WTC11 (cell line): ENCODE measurements at regions of chr6 and their contacts with region 1.

Region 1: DNA sequence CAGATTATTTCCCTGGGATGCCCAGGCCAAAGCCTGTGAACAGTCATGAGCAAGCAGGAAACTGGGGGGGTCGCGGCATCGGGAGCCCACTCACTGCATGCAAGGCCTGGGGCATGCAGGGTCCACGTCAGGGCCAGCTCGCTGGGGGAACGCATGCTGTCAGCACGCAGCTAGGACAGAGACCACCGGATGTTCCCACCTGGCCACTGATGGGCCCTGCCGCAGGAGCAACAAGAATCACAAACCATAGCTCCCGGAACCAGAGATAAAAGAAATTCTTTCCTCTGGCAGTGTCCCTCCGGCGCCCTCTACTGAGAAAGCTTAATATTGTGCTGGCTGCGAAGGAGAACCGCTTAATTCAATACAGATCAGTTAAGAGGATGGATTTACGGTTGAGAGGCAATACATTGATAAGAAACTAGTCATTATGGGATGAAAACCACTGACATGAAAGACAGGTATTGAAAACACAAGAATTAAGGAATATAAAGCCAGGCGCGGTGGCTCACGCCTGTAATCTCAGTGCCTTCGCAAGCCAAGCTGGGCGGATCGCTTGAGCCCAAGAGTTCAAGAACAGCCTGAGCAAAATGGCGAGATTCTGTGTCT is 32.6 kb downstream of the C6orf15 start:
- DNase-seq: peak; percentile 80
- ATAC-seq: peak; percentile 82
- H3K4me3 Mint-ChIP-seq: no peak overlapping the region
- H3K27ac Mint-ChIP-seq: no peak overlapping the region
- H3K4me1 Mint-ChIP-seq: peaks cover 11% of the 10 kb centered on the region
- H3K27me3 Mint-ChIP-seq: no peaks in the 10 kb centered on the region
- CTCF ChIP-seq: peak; percentile 39

Region 2: DNA sequence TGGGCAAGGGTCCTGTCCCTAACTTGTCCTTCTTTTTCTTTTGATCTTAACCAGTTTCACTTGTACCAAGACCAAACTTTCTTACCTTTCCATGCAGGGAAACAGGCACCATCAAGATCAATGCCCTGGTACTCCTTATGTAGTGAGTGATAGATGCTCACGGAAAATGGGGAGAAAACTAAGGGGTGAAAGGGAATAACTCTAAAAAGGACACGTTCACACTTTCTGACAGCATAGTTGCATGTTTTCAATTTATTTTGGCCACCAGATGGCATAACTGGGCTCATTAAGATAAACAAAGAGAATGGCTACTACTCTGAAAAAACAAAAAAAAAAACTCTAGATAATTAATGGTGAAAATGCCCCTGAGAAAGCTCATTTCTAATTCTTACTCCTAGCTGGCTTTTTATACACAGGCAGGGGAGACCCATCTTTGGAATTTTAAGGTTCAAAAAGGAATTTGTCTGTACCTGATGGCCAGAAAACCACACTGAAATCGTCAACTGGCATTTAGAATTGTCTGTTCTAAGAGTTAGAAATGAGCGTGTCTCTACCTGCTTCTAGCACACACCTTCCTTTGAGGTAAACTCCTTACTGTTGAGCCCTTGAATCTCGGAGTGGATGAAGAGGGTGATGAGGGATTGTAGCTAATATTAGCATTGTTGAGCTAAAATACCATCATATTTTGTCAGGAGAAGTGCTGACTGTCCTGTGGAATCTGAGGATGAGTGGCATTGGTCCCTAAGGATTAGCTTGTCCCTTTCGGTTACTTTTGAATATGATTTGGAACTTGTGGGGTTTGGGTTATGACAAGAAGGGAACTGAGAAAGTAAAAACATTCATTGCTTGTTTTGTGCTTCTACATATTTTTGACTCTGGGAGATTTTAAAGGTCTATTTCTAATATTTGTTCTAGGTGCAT is 257.6 kb before region 1 on chr6:
- CTCF ChIA-PET with region 1: interaction called, 11 read pairs
- POLR2A ChIA-PET with region 1: no interaction called
- DNase-seq: no peak
- ATAC-seq: peak; percentile 59
- H3K4me3 Mint-ChIP-seq: no peak overlapping the region
- H3K27ac Mint-ChIP-seq: peak overlapping the region; percentile 54; the same call in 1 of the 2 replicates
- H3K4me1 Mint-ChIP-seq: peaks cover 30% of the 10 kb centered on the region
- H3K27me3 Mint-ChIP-seq: no peaks in the 10 kb centered on the region
- CTCF ChIP-seq: peak; percentile 18; the same call in 1 of the 2 replicates

Region 3: GRCh38 chr6:30907758-30908591 is 171.8 kb before region 1 on chr6 and contains the start of gene GTF2H4:
- CTCF ChIA-PET with region 1: interaction called, 106 read pairs
- POLR2A ChIA-PET with region 1: no interaction called
- DNase-seq: peak; percentile 96
- ATAC-seq: peak; percentile 98
- H3K4me3 Mint-ChIP-seq: peak within 1 kb of the TSS; percentile 100
- H3K27ac Mint-ChIP-seq: peak within 1 kb of the TSS; percentile 75
- H3K4me1 Mint-ChIP-seq: peaks cover 13% of the 10 kb centered on the region
- H3K27me3 Mint-ChIP-seq: no peaks in the 10 kb centered on the region; the same call in 1 of the 2 replicates
- CTCF ChIP-seq: no peak
- total RNA-seq, gene GTF2H4: 46.2 to 49.7 TPM (median 49.2 TPM) in 3 replicates

Region 4: GRCh38 chr6:30942338-30943060 is 137.3 kb before region 1 on chr6:
- CTCF ChIA-PET with region 1: interaction called, 28 read pairs
- POLR2A ChIA-PET with region 1: no interaction called
- DNase-seq: peak; percentile 98
- ATAC-seq: peak; percentile 93
- H3K4me3 Mint-ChIP-seq: peak overlapping the region; percentile 17; the same call in 1 of the 2 replicates
- H3K27ac Mint-ChIP-seq: peak overlapping the region; percentile 83
- H3K4me1 Mint-ChIP-seq: peaks cover 44% of the 10 kb centered on the region
- H3K27me3 Mint-ChIP-seq: no peaks in the 10 kb centered on the region; the same call in 1 of the 2 replicates
- CTCF ChIP-seq: peak; percentile 36; the same call in 1 of the 2 replicates

Region 5: GRCh38 chr6:31007694-31008093 is 72.1 kb before region 1 on chr6:
- CTCF ChIA-PET with region 1: interaction called, 11 read pairs
- POLR2A ChIA-PET with region 1: no interaction called
- DNase-seq: no peak
- ATAC-seq: no peak
- H3K4me3 Mint-ChIP-seq: no peak overlapping the region
- H3K27ac Mint-ChIP-seq: no peak overlapping the region
- H3K4me1 Mint-ChIP-seq: no peaks in the 10 kb centered on the region
- H3K27me3 Mint-ChIP-seq: no peaks in the 10 kb centered on the region
- CTCF ChIP-seq: no peak

Region 6: GRCh38 chr6:31058128-31058894 is 21.4 kb before region 1 on chr6:
- CTCF ChIA-PET with region 1: interaction called, 15 read pairs
- POLR2A ChIA-PET with region 1: no interaction called
- DNase-seq: no peak
- ATAC-seq: no peak
- H3K4me3 Mint-ChIP-seq: no peak overlapping the region
- H3K27ac Mint-ChIP-seq: no peak overlapping the region
- H3K4me1 Mint-ChIP-seq: peaks cover 12% of the 10 kb centered on the region
- H3K27me3 Mint-ChIP-seq: peaks cover 3% of the 10 kb centered on the region; the same call in 1 of the 2 replicates
- CTCF ChIP-seq: no peak

Region 7: GRCh38 chr6:31114970-31115849 is 35.5 kb after region 1 on chr6:
- CTCF ChIA-PET with region 1: interaction called, 16 read pairs
- POLR2A ChIA-PET with region 1: no interaction called
- DNase-seq: no peak
- ATAC-seq: peak; percentile 70
- H3K4me3 Mint-ChIP-seq: no peak overlapping the region
- H3K27ac Mint-ChIP-seq: no peak overlapping the region
- H3K4me1 Mint-ChIP-seq: peaks cover 30% of the 10 kb centered on the region
- H3K27me3 Mint-ChIP-seq: peaks cover 22% of the 10 kb centered on the region
- CTCF ChIP-seq: no peak